WTC11 (cell line): ENCODE measurements at regions of chr18 and their contacts with region 1.

Region 1: DNA sequence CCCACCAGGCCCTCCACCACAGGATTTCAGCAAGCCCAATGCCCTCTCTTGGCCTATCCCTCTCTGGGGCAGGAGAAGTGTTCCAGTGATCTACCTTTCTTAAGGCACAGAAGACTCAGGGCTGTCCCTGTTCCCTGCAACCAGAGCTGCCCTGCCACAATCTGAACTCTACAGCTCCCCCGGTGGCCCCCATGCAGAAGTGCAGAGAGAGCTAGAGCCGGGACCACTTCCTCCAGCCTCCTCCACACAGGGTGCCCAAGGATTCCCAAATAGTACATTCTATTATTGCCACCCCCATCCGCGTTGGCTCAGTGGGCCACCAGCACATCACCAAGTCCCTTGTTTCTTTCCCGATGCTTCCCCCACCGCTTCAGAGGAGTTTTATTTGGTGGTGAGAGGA is 114.8 kb upstream of the PTPRM start:
- DNase-seq: peak; percentile 61
- ATAC-seq: peak; percentile 100
- H3K4me3 Mint-ChIP-seq: no peak overlapping the region
- H3K27ac Mint-ChIP-seq: no peak overlapping the region
- H3K4me1 Mint-ChIP-seq: no peaks in the 10 kb centered on the region
- H3K27me3 Mint-ChIP-seq: no peaks in the 10 kb centered on the region; the same call in 1 of the 2 replicates
- CTCF ChIP-seq: peak; percentile 67

Region 2: DNA sequence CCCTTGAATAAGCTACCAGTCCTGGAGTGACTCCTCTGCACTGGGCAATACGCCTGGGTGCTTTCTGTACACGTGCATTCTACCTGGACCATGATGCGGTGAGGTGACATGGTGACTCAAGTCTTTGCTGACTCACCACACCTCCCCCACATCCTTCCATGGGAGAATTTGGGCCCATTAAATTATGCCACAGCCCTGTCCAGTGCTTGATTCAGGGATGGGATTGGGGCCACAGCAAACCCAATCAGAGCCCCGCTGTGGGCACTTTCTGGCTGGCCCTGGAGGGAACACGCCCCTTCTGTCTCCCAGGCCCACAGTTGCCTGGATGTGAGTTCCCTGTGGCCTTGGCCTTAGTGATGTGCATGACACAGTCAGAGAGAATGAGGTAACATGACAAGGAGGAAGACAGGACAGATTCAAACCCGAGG is 134.5 kb before region 1 on chr18:
- CTCF ChIA-PET with region 1: no interaction called
- POLR2A ChIA-PET with region 1: no interaction called
- DNase-seq: no peak
- ATAC-seq: no peak
- H3K4me3 Mint-ChIP-seq: no peak overlapping the region
- H3K27ac Mint-ChIP-seq: no peak overlapping the region
- H3K4me1 Mint-ChIP-seq: no peaks in the 10 kb centered on the region
- H3K27me3 Mint-ChIP-seq: no peaks in the 10 kb centered on the region
- CTCF ChIP-seq: no peak

Region 3: GRCh38 chr18:7438646-7439045 is 13.7 kb before region 1 on chr18:
- CTCF ChIA-PET with region 1: interaction called, 20 read pairs
- POLR2A ChIA-PET with region 1: no interaction called
- DNase-seq: no peak
- ATAC-seq: no peak
- H3K4me3 Mint-ChIP-seq: no peak overlapping the region
- H3K27ac Mint-ChIP-seq: peak overlapping the region; percentile 24; the same call in 1 of the 2 replicates
- H3K4me1 Mint-ChIP-seq: peaks cover 6% of the 10 kb centered on the region
- H3K27me3 Mint-ChIP-seq: no peaks in the 10 kb centered on the region
- CTCF ChIP-seq: no peak

Region 4: GRCh38 chr18:7524786-7525185 is 72.5 kb after region 1 on chr18:
- CTCF ChIA-PET with region 1: interaction called, 10 read pairs
- POLR2A ChIA-PET with region 1: no interaction called
- DNase-seq: no peak
- ATAC-seq: no peak
- H3K4me3 Mint-ChIP-seq: no peak overlapping the region
- H3K27ac Mint-ChIP-seq: no peak overlapping the region; the same call in 1 of the 2 replicates
- H3K4me1 Mint-ChIP-seq: peaks cover 32% of the 10 kb centered on the region
- H3K27me3 Mint-ChIP-seq: no peaks in the 10 kb centered on the region
- CTCF ChIP-seq: no peak

Region 5: GRCh38 chr18:7677001-7677400 is 224.7 kb after region 1 on chr18:
- CTCF ChIA-PET with region 1: no interaction called
- POLR2A ChIA-PET with region 1: no interaction called
- DNase-seq: no peak
- ATAC-seq: no peak
- H3K4me3 Mint-ChIP-seq: no peak overlapping the region
- H3K27ac Mint-ChIP-seq: no peak overlapping the region
- H3K4me1 Mint-ChIP-seq: no peaks in the 10 kb centered on the region
- H3K27me3 Mint-ChIP-seq: no peaks in the 10 kb centered on the region
- CTCF ChIP-seq: no peak